Activated CD8-positive, alpha-beta memory T cell treated with anti-CD3 and anti-CD28 coated beads, Interleukin-2, amount 10 ng/mL, durations not matched to agents 7 days and 5 days (primary cell): ENCODE measurements at regions of chr3 and their contacts with region 1.

Region 1: GRCh38 chr3:158644345-158644908 is at the start of gene GFM1:
- DNase-seq: peak; percentile 92
- ATAC-seq: peak; percentile 95
- H3K4me3 Mint-ChIP-seq: peak within 1 kb of the TSS; percentile 97
- H3K27ac Mint-ChIP-seq: peak within 1 kb of the TSS; percentile 91
- H3K4me1 Mint-ChIP-seq: peaks cover 49% of the 10 kb centered on the region
- H3K27me3 Mint-ChIP-seq: no peaks in the 10 kb centered on the region
- total RNA-seq, gene GFM1: 39.4 to 50.9 TPM

Region 2: GRCh38 chr3:158509891-158510290 is 134.5 kb before region 1 on chr3:
- CTCF ChIA-PET with region 1: no interaction called
- DNase-seq: no peak
- ATAC-seq: no peak
- H3K4me3 Mint-ChIP-seq: no peak overlapping the region
- H3K27ac Mint-ChIP-seq: no peak overlapping the region
- H3K4me1 Mint-ChIP-seq: no peaks in the 10 kb centered on the region
- H3K27me3 Mint-ChIP-seq: no peaks in the 10 kb centered on the region

Region 3: DNA sequence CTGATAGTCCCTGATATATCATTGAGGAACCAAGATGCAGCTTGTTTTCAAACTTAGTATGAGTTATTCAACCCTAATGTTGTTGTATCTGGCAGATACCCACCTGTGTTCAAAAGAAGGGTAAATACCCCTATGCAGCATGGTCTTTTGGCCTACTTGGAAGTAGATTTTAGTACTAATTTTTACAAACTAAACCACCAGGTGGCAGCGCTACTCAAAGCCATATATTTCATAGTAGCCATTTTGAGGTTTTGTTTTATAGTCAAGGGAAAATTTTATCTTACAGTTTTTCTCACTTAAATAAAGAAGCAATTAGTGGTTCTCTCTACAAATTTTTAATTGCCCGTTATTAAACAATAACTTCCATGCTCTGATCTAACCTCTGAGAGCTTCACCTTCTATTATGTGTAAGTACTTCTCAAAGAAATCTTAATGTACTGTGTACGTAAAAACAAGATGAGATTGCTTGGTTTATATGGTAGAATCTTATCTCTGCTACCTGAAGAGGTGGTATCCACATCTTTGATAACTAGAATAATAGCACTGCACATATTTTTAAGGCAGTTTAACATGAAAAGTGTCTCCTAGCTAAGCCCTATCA is 104.9 kb before region 1 on chr3:
- CTCF ChIA-PET with region 1: interaction called, 11 read pairs
- DNase-seq: peak; percentile 47
- ATAC-seq: peak; percentile 47
- H3K4me3 Mint-ChIP-seq: no peak overlapping the region
- H3K27ac Mint-ChIP-seq: no peak overlapping the region
- H3K4me1 Mint-ChIP-seq: no peaks in the 10 kb centered on the region
- H3K27me3 Mint-ChIP-seq: no peaks in the 10 kb centered on the region

Region 4: GRCh38 chr3:158570999-158571974 is 73.1 kb before region 1 on chr3 and contains the start of gene MLF1:
- CTCF ChIA-PET with region 1: interaction called, 16 read pairs
- DNase-seq: peak; percentile 91
- ATAC-seq: peak; percentile 99
- H3K4me3 Mint-ChIP-seq: peak within 1 kb of the TSS; percentile 73
- H3K27ac Mint-ChIP-seq: peak within 1 kb of the TSS; percentile 66
- H3K4me1 Mint-ChIP-seq: peaks cover 12% of the 10 kb centered on the region
- H3K27me3 Mint-ChIP-seq: peaks cover 27% of the 10 kb centered on the region
- total RNA-seq, gene MLF1: 2.4 to 3.3 TPM

Region 5: DNA sequence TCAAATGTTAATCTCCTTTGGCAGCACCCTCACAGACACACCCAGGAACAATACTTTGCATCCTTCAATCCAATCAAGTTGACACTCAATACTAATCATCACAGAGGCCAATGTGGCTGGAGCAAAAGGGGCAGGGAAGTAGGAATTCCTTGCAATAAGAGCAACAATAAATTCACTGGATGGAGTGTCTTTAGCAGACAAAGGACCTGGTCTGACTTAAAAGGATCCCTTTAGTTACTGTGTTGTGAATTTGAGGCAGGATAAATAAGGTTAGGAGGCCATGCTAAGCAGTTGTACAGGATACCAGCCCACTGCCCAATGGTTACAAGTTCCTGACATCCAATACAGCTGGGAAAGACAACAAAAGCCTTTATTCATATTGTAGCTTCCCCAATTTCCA is 12.4 kb before region 1 on chr3:
- CTCF ChIA-PET with region 1: interaction called, 11 read pairs
- DNase-seq: no peak
- ATAC-seq: no peak
- H3K4me3 Mint-ChIP-seq: no peak overlapping the region
- H3K27ac Mint-ChIP-seq: no peak overlapping the region
- H3K4me1 Mint-ChIP-seq: no peaks in the 10 kb centered on the region
- H3K27me3 Mint-ChIP-seq: peaks cover 11% of the 10 kb centered on the region

Region 6: GRCh38 chr3:158732856-158733200 is 88.4 kb after region 1 on chr3:
- CTCF ChIA-PET with region 1: no interaction called
- DNase-seq: no peak
- ATAC-seq: no peak
- H3K4me3 Mint-ChIP-seq: no peak overlapping the region
- H3K27ac Mint-ChIP-seq: no peak overlapping the region
- H3K4me1 Mint-ChIP-seq: peaks cover 9% of the 10 kb centered on the region
- H3K27me3 Mint-ChIP-seq: peaks cover 2% of the 10 kb centered on the region

Region 7: GRCh38 chr3:158801696-158802408 is 157.4 kb after region 1 on chr3 and contains the start of gene MFSD1:
- CTCF ChIA-PET with region 1: interaction called, 10 read pairs
- DNase-seq: peak; percentile 96
- ATAC-seq: peak; percentile 95
- H3K4me3 Mint-ChIP-seq: peak within 1 kb of the TSS; percentile 84
- H3K27ac Mint-ChIP-seq: peak within 1 kb of the TSS; percentile 83
- H3K4me1 Mint-ChIP-seq: peaks cover 22% of the 10 kb centered on the region
- H3K27me3 Mint-ChIP-seq: peaks cover 4% of the 10 kb centered on the region
- total RNA-seq, gene MFSD1: 19.4 to 20.6 TPM